ENCODE measurements at regions of chr21 and their contacts with region 1.

Region 1: GRCh38 chr21:42117229-42117966 is 46.3 kb downstream of the UMODL1 start:
- DNase-seq: peak; percentile 82
- H3K4me3 Mint-ChIP-seq: no peak overlapping the region
- H3K27ac Mint-ChIP-seq: no peak overlapping the region
- H3K4me1 Mint-ChIP-seq: peaks cover 11% of the 10 kb centered on the region
- H3K27me3 Mint-ChIP-seq: peaks cover 51% of the 10 kb centered on the region

Region 2: GRCh38 chr21:41612674-41613532 is 504.5 kb before region 1 on chr21:
- CTCF ChIA-PET with region 1: interaction called, 16 read pairs
- POLR2A ChIA-PET with region 1: no interaction called
- intact Hi-C with region 1: loop called (anchors 1 kb)
- DNase-seq: peak; percentile 32
- H3K4me3 Mint-ChIP-seq: no peak overlapping the region
- H3K27ac Mint-ChIP-seq: no peak overlapping the region
- H3K4me1 Mint-ChIP-seq: no peaks in the 10 kb centered on the region
- H3K27me3 Mint-ChIP-seq: peaks cover 32% of the 10 kb centered on the region

Region 3: DNA sequence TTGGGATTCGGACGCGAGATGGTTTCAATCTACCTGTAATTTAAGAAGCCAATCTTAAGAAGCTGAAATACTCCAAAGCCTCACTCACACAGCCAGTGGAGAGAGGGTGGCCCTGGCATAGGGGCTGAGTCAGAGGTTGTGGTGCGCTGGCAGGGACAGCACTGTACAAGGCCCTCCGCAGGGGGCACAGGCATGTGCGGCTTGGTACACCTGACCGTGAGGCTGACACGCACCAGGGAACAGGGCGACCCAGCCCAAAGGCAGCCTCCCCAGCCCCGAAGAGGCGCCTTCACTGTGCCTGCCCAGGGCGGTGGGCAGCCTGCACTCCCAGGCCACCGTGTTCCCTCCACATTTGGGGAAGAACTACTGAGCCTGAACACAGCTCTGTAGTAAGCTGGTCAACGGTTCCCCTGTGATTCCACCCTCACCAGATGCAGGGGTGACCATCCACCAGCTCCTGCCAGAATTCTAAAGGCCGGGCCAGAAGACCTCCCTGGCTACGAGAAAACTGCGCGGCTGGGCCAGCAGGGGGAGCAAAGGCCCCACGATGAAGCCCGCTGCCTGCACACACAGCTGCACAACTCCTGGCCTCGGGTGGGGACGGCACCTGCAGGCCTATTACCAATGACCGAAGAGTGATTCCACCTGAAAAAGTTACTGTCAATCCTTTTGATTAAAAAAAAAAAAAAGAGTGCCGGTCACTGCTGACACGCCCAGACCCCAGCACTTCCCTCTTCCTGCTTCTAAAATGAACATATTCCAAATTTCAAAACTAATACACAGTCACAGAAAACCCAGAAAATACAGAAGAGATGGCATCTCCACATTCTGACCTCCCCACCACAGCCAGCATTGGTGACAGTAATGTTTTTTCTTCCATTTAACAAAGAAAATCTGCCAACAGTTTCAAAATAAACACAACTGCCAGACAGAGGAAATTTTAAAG is 300.9 kb before region 1 on chr21:
- CTCF ChIA-PET with region 1: interaction called, 70 read pairs
- POLR2A ChIA-PET with region 1: no interaction called
- intact Hi-C with region 1: loop called (anchors 1 kb)
- DNase-seq: peak; percentile 71
- H3K4me3 Mint-ChIP-seq: no peak overlapping the region
- H3K27ac Mint-ChIP-seq: no peak overlapping the region
- H3K4me1 Mint-ChIP-seq: peaks cover 2% of the 10 kb centered on the region
- H3K27me3 Mint-ChIP-seq: no peaks in the 10 kb centered on the region

Region 4: DNA sequence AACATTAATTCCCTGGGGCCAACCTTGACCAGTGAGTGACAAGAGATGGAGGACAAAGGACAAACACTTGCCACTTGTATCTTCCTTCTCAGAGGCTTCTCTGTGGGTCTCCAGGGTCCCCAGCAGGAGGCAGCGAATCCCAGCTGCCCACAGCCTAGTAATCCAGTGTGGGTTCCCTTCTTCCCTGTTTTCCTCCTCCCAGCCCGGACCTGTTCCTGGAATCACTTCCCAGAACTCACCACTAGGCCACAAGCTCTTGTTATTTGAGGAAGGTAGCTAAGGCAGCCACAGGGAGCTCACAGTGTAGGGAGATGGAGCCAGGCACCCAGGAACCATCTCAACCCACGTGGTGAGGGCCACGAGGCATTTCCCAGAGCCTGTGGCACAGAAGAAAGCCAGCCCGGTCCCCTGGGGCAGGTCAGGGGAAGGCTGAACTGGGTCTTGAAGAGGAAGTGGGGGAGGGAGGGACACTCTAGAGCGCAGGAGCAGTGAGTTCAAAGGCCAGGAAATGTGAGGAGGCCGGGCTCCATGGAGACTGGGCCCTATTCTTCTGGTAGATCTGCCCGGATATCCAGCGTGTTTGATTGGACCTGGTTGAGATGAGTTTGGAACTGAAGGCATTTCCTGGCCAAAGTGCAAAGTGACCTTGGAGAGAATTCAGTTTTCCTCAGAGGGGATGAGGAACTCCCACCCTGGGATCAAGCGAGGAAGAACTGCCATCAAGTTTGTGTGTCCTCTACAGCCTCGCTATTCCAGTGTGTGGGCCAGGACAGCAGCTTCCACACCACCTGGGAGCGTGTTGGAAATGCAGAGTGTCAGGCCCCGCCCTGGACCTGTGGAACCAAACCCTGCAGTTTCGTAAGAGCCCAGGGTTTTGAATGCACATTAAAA is 143.3 kb before region 1 on chr21:
- CTCF ChIA-PET with region 1: no interaction called
- POLR2A ChIA-PET with region 1: no interaction called
- intact Hi-C with region 1: loop called (anchors 10 kb)
- DNase-seq: peak; percentile 25
- H3K4me3 Mint-ChIP-seq: no peak overlapping the region
- H3K27ac Mint-ChIP-seq: peak overlapping the region; percentile 5
- H3K4me1 Mint-ChIP-seq: peaks cover 11% of the 10 kb centered on the region
- H3K27me3 Mint-ChIP-seq: no peaks in the 10 kb centered on the region

Region 5: DNA sequence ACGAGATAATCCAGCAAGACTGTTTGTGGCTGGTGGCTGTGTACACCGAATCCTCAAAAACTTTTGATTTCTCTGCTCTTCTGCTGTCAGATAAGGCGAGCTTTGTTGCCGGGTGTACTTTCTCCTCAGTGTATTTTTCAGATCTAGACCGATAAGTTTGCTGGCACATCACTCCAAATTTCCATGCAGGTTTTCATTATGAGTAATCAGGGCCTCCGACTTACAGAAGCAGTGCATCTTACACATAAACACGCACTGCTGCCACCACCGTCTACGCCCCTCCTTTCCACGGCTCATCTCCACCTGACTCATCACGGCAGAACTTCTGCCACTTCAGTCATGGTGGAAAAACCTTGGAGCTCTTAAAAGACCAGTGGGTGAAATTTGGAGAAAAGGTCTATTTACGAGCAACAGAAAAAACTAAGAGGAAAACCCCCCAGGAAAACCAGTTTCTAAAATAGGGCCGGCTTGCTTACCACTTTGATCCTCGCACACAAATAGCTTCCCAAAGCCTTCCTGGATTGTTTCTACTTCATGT is 114.9 kb before region 1 on chr21:
- CTCF ChIA-PET with region 1: interaction called, 7 read pairs
- POLR2A ChIA-PET with region 1: no interaction called
- intact Hi-C with region 1: loop called (anchors 2 kb)
- DNase-seq: peak; percentile 92
- H3K4me3 Mint-ChIP-seq: peak overlapping the region; percentile 37
- H3K27ac Mint-ChIP-seq: peak overlapping the region; percentile 86
- H3K4me1 Mint-ChIP-seq: peaks cover 61% of the 10 kb centered on the region
- H3K27me3 Mint-ChIP-seq: no peaks in the 10 kb centered on the region

Measured in activated CD4-positive, alpha-beta memory T cell treated with anti-CD3 and anti-CD28 coated beads for 36 hours (primary cell).